ENCODE measurements at regions of chr7 and their contacts with region 1.

Region 1: DNA sequence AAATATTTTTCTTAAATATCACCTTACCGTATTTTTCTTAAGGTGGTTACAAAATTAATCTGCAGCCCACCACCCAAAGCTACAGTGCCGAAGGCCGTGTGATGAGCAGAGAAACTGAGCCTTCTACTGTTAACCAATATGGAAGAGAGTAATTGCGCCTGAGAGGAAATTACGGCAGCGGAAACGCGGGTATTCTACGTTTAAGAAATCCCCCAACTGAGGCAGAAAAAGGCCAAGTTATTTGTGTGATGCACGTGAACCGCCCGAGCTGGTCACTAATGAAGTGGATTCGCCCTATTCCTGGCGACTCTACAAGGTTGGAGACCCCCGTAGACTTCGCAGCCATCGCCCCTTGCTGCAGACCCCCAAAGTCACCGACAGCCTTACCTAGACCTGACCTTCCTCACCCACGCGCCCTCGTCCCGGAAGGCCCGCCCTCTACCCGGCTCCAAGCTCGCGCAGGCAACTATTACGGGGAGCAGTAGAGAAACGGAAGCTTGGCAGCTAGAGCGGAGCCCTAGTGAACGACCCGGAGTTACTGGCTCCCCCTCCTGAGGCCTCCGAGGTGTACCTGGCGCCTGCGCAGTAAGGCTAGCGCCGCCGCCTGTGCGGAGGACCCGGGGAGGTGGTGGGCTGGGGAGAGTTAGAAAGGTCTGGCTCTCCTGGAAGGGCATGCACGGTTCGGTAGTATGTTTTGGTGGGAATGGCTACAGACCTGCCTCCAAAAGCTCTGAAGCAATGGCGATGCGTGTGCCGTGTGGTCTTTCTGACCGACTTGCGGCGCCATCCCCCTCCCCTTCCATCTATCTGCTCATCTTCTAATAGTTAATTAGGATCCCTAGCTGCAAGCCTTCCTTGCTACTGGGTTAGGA is at the start of gene MRPS33:
- DNase-seq: peak; percentile 98
- H3K4me3 ChIP-seq: peak within 1 kb of the TSS; percentile 64
- H3K27ac ChIP-seq: peak within 1 kb of the TSS; percentile 77
- H3K4me1 ChIP-seq: peaks cover 9% of the 10 kb centered on the region
- H3K27me3 ChIP-seq: peaks cover 5% of the 10 kb centered on the region
- CTCF ChIP-seq: peak; percentile 88
- total RNA-seq, gene MRPS33: 61.3 and 66.0 TPM in 2 replicates

Region 2: GRCh38 chr7:140122965-140123364 is 891.8 kb before region 1 on chr7:
- CTCF ChIA-PET with region 1: no interaction called
- POLR2A ChIA-PET with region 1: no interaction called
- intact Hi-C with region 1: no loop called
- DNase-seq: no peak
- H3K4me3 ChIP-seq: no peak overlapping the region
- H3K27ac ChIP-seq: no peak overlapping the region
- H3K4me1 ChIP-seq: no peaks in the 10 kb centered on the region
- H3K27me3 ChIP-seq: no peaks in the 10 kb centered on the region
- CTCF ChIP-seq: no peak

Region 3: GRCh38 chr7:140517546-140518369 is 497.0 kb before region 1 on chr7:
- CTCF ChIA-PET with region 1: no interaction called
- POLR2A ChIA-PET with region 1: no interaction called
- intact Hi-C with region 1: loop called (anchors 5 kb)
- DNase-seq: peak; percentile 92
- H3K4me3 ChIP-seq: no peak overlapping the region
- H3K27ac ChIP-seq: no peak overlapping the region
- H3K4me1 ChIP-seq: no peaks in the 10 kb centered on the region
- H3K27me3 ChIP-seq: no peaks in the 10 kb centered on the region
- CTCF ChIP-seq: peak; percentile 85

Region 4: DNA sequence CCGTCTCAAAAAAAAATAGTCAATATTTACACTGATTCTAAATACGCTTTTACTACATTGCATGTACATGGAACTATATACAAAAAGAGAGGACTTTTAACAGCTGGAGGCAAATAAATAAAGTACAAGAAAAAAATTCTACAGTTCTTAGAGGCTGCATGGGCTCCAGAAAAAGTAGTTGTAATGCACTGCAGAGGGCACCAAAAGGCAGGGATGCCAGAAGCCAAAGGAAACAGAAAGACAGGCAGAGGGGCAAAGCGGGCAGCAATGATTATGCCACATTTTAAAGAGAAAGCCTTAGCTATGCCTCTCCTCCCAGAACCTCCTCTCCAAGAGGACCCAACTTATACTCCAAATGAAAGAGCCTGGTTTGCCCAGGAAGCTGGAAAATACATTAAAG is 353.6 kb before region 1 on chr7:
- CTCF ChIA-PET with region 1: no interaction called
- POLR2A ChIA-PET with region 1: no interaction called
- intact Hi-C with region 1: loop called (anchors 5 kb)
- DNase-seq: no peak
- H3K4me3 ChIP-seq: no peak overlapping the region
- H3K27ac ChIP-seq: no peak overlapping the region
- H3K4me1 ChIP-seq: no peaks in the 10 kb centered on the region
- H3K27me3 ChIP-seq: no peaks in the 10 kb centered on the region
- CTCF ChIP-seq: peak; percentile 32; the same call in 1 of the 2 replicates

Region 5: DNA sequence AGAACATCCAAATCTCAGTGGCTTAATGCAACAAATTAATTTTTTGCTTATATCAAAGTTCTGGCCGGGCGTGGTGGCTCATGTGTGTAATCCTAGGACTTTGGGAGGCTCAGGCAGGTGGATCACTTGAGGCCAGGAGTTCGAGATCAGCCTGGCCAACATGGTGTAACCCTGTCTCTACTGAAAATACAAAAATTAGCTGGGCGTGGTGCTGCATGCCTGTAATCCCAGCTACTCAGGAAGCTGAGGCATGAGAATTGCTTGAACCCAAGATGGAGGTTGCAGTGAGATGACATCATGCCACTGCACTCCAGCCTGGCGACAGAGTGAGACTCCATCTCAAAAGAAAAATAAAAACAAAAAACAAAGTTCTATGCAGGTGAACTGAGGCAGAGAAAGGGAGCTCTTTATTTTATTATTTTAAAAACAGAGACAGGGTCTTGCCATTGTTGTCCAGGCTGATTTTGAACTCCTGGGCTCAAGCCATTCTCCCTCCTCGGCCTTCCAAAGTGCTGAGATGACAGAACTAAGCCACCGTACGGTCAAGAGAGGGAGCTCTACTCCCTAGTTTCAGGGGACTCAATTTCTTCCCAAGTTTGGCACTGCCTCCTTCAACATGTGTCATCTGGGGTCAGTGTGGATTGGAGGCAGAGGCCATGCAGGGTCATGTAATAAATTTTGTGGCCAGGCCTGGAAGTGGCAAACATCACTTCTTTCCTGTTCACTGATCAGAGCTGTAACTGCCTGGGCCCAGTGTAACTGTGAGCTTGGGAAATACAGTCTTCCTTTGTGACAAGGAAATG is 339.7 kb before region 1 on chr7:
- CTCF ChIA-PET with region 1: no interaction called
- POLR2A ChIA-PET with region 1: no interaction called
- intact Hi-C with region 1: loop called (anchors 1 kb)
- DNase-seq: peak; percentile 44
- H3K4me3 ChIP-seq: no peak overlapping the region
- H3K27ac ChIP-seq: no peak overlapping the region
- H3K4me1 ChIP-seq: peaks cover 12% of the 10 kb centered on the region
- H3K27me3 ChIP-seq: no peaks in the 10 kb centered on the region
- CTCF ChIP-seq: peak; percentile 60

Region 6: DNA sequence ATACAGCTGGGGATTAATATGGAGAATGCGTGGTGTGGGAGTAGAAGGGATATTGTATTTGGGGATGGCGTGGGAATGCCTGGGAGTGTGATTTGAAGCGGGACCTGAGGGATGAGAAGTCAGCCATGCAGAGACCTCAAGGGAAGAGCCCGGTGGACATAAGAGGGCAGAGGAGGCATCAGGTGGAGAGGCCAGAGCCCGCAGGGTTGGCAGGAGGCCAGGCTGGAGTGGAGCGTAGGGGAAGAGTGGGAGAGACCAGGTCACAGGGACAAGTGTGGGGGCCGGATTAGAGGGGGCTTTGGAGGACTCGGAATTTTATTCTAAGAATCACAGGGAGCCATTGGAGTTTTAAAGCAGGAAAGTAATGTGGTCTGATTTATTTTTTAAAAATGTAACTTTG is 316.3 kb before region 1 on chr7:
- CTCF ChIA-PET with region 1: no interaction called
- POLR2A ChIA-PET with region 1: no interaction called
- intact Hi-C with region 1: no loop called
- DNase-seq: no peak
- H3K4me3 ChIP-seq: no peak overlapping the region
- H3K27ac ChIP-seq: no peak overlapping the region
- H3K4me1 ChIP-seq: peaks cover 22% of the 10 kb centered on the region
- H3K27me3 ChIP-seq: no peaks in the 10 kb centered on the region
- CTCF ChIP-seq: no peak

Region 7: DNA sequence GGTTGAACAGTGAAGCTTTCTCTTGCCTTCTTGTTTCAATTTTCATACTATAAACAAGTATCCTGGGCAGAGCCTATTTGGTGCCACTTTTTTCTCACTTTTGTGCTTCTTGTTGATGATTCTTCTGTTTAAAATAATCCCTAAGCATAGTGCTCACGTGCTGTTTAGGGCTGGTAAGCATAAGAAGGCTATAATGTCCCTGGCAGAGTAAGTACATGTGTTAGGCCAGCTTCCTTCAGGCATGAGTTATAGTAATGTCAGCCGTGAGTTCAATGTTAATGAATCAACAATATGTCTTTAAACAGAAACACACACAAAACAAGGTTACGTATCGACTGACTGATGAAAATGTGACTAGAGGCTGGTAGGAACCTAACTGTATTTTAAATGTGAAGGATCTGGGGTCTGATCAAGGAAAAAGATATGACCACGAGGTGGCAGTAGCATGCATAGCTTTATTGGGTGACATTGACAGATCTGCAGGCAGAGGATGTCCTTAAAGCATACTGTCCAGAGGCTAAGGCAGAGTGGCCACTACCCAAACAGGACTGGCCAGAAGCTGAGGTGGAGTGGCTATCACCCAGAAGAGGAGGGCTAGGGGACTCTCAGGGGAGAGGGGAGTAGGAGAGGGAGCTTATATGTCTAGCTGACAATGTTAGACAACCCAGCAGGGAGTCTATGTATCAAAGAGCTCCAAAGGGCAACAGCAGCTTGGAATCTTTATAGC is 203.8 kb before region 1 on chr7:
- CTCF ChIA-PET with region 1: interaction called, 5 read pairs
- POLR2A ChIA-PET with region 1: no interaction called
- intact Hi-C with region 1: loop called (anchors 1 kb)
- DNase-seq: peak; percentile 72
- H3K4me3 ChIP-seq: no peak overlapping the region
- H3K27ac ChIP-seq: no peak overlapping the region
- H3K4me1 ChIP-seq: peaks cover 4% of the 10 kb centered on the region
- H3K27me3 ChIP-seq: no peaks in the 10 kb centered on the region
- CTCF ChIP-seq: peak; percentile 85

Region 8: GRCh38 chr7:141072548-141073172 is 57.9 kb after region 1 on chr7:
- CTCF ChIA-PET with region 1: no interaction called
- POLR2A ChIA-PET with region 1: no interaction called
- intact Hi-C with region 1: loop called (anchors 2 kb)
- DNase-seq: peak; percentile 75
- H3K4me3 ChIP-seq: peak overlapping the region; percentile 45
- H3K27ac ChIP-seq: no peak overlapping the region
- H3K4me1 ChIP-seq: peaks cover 16% of the 10 kb centered on the region
- H3K27me3 ChIP-seq: peaks cover 80% of the 10 kb centered on the region
- CTCF ChIP-seq: no peak

Region 9: GRCh38 chr7:141533149-141533949 is 518.6 kb after region 1 on chr7:
- CTCF ChIA-PET with region 1: interaction called, 3 read pairs
- POLR2A ChIA-PET with region 1: no interaction called
- intact Hi-C with region 1: loop called (anchors 2 kb)
- DNase-seq: peak; percentile 83
- H3K4me3 ChIP-seq: no peak overlapping the region
- H3K27ac ChIP-seq: no peak overlapping the region
- H3K4me1 ChIP-seq: no peaks in the 10 kb centered on the region
- H3K27me3 ChIP-seq: peaks cover 6% of the 10 kb centered on the region
- CTCF ChIP-seq: peak; percentile 96